Activated B cell treated with CpG ODN at 0.5 μM for 24 hours (primary cell): ENCODE measurements at regions of chr9 and their contacts with region 1.

Region 1: DNA sequence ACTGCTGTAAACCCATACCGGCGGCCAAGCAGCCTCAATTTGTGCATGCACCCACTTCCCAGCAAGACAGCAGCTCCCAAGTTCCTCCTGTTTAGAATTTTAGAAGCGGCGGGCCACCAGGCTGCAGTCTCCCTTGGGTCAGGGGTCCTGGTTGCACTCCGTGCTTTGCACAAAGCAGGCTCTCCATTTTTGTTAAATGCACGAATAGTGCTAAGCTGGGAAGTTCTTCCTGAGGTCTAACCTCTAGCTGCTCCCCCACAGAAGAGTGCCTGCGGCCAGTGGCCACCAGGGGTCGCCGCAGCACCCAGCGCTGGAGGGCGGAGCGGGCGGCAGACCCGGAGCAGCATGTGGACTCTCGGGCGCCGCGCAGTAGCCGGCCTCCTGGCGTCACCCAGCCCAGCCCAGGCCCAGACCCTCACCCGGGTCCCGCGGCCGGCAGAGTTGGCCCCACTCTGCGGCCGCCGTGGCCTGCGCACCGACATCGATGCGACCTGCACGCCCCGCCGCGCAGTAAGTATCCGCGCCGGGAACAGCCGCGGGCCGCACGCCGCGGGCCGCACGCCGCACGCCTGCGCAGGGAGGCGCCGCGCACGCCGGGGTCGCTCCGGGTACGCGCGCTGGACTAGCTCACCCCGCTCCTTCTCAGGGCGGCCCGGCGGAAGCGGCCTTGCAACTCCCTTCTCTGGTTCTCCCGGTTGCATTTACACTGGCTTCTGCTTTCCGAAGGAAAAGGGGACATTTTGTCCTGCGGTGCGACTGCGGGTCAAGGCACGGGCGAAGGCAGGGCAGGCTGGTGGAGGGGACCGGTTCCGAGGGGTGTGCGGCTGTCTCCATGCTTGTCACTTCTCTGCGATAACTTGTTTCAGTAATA is at the start of gene FXN:
- DNase-seq: peak; percentile 80
- ATAC-seq: peak; percentile 92
- H3K4me3 Mint-ChIP-seq: peak within 1 kb of the TSS; percentile 96
- H3K27ac Mint-ChIP-seq: peak within 1 kb of the TSS; percentile 85
- H3K4me1 Mint-ChIP-seq: peaks cover 14% of the 10 kb centered on the region
- H3K27me3 Mint-ChIP-seq: no peaks in the 10 kb centered on the region
- CTCF ChIP-seq: peak; percentile 83
- total RNA-seq, gene FXN: 12.7 and 17.7 TPM in 2 replicates

Region 2: GRCh38 chr9:68779558-68780384 is 255.9 kb before region 1 on chr9:
- CTCF ChIA-PET with region 1: no interaction called
- POLR2A ChIA-PET with region 1: no interaction called
- intact Hi-C with region 1: loop called (anchors 2 kb)
- DNase-seq: peak; percentile 93
- ATAC-seq: peak; percentile 93
- H3K4me3 Mint-ChIP-seq: no peak overlapping the region
- H3K27ac Mint-ChIP-seq: no peak overlapping the region
- H3K4me1 Mint-ChIP-seq: peaks cover 6% of the 10 kb centered on the region
- H3K27me3 Mint-ChIP-seq: no peaks in the 10 kb centered on the region
- CTCF ChIP-seq: no peak

Region 3: DNA sequence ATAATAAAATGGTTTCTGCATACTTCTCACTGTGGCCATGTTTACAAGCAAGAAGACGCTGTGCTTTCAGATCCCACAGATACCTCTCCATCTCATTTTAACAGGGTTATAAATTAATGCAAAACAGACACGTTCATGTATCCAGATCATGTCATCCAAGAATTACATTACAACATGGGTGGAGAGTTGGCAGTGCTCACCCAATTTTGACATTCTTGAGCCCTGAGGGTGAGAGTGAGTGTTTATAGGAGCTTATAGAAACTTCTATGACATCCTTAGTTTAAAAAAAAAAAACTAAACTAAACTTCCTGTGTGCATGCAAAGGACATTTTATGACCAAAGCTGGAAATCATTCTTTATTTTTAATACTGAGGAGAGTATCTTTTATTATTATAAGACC is 30.8 kb before region 1 on chr9:
- CTCF ChIA-PET with region 1: no interaction called
- POLR2A ChIA-PET with region 1: no interaction called
- intact Hi-C with region 1: no loop called
- DNase-seq: no peak
- ATAC-seq: no peak
- H3K4me3 Mint-ChIP-seq: no peak overlapping the region
- H3K27ac Mint-ChIP-seq: no peak overlapping the region
- H3K4me1 Mint-ChIP-seq: no peaks in the 10 kb centered on the region
- H3K27me3 Mint-ChIP-seq: no peaks in the 10 kb centered on the region
- CTCF ChIP-seq: no peak

Region 4: DNA sequence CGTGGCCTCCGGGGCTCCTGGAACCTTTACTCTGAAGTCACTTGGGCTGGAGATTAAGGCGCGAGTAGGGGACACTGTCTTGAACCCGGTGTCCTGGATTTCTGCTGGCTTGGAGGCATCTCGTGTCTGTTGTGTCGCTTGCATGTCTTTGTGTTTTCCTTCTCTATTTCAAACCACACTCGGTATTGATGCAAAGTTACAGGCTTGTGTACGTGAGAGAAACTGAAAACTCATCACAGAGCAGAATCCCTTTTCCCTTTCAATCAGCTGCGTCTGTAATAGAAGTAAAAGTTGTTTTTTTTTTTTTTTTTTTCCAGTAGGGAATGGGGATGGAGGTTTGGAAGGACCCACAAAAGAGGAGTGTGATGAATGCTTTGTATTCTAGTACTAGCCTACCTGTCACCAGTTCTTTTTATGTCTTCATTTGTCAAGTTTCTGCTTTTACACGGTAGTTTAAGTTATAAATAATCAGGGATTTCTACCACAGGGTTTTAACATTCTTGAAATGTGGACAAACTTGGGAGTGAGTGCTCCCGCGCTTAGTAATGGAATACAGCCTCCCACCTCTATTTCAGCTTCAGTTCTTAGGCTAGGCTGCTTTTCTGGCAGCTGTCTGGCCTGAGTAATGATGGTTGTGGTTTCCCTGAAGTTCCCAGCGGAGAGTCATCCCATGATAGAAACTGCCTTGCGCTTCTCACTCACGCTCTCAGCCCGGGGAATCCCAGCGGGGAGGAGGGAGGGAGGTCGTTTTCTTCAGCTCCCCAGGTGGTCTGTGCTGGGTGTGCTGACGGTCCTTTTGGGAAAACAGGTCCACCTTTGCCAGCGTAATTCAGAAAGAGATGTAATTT is 139.2 kb after region 1 on chr9:
- CTCF ChIA-PET with region 1: no interaction called
- POLR2A ChIA-PET with region 1: no interaction called
- intact Hi-C with region 1: loop called (anchors 5 kb)
- DNase-seq: peak; percentile 19
- ATAC-seq: peak; percentile 68
- H3K4me3 Mint-ChIP-seq: peak overlapping the region; percentile 84
- H3K27ac Mint-ChIP-seq: no peak overlapping the region
- H3K4me1 Mint-ChIP-seq: peaks cover 33% of the 10 kb centered on the region
- H3K27me3 Mint-ChIP-seq: peaks cover 37% of the 10 kb centered on the region
- CTCF ChIP-seq: no peak

Region 5: DNA sequence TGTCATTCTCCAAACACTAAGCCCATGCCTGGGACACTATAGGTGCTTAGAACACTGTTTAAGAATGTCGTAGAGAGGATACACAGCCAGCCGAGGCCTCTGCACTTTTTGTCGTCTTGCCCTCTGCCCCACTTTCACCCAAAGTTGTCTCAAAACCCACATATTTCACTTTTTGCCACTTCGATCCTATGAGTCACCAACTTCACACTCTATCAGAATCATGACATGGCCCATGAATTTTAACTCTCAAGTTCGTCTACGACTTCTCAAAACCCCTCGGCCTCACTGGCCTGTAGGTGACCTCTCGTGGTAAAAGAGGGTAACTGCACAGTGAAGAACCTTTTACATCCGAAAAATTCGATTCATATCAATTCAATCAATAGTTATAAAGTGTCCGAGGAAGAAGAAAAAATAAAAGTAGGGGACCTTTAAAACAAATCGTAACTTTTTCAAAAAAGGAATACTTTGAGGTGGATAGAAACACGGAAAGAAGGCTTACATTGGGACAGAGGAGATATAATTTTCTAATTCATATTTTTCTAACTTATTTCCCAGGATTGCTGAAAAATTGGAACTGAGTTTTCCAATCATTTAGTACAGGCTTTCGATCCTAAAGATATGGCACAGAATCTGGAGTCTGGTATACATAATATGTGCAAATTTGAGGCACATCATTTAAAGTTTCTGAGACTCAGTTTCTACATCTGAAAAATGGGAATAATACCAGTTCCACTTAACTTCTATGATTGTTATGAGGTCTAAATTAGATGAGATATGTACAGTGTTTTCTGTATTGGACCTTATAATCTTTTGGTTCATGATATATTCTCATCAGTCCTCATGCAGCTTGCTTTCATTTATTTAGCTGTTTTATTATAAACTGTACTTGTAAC is 513.9 kb after region 1 on chr9:
- CTCF ChIA-PET with region 1: no interaction called
- POLR2A ChIA-PET with region 1: no interaction called
- intact Hi-C with region 1: loop called (anchors 1 kb)
- DNase-seq: no peak
- ATAC-seq: no peak
- H3K4me3 Mint-ChIP-seq: no peak overlapping the region
- H3K27ac Mint-ChIP-seq: no peak overlapping the region
- H3K4me1 Mint-ChIP-seq: no peaks in the 10 kb centered on the region
- H3K27me3 Mint-ChIP-seq: peaks cover 6% of the 10 kb centered on the region
- CTCF ChIP-seq: peak; percentile 82

Region 6: DNA sequence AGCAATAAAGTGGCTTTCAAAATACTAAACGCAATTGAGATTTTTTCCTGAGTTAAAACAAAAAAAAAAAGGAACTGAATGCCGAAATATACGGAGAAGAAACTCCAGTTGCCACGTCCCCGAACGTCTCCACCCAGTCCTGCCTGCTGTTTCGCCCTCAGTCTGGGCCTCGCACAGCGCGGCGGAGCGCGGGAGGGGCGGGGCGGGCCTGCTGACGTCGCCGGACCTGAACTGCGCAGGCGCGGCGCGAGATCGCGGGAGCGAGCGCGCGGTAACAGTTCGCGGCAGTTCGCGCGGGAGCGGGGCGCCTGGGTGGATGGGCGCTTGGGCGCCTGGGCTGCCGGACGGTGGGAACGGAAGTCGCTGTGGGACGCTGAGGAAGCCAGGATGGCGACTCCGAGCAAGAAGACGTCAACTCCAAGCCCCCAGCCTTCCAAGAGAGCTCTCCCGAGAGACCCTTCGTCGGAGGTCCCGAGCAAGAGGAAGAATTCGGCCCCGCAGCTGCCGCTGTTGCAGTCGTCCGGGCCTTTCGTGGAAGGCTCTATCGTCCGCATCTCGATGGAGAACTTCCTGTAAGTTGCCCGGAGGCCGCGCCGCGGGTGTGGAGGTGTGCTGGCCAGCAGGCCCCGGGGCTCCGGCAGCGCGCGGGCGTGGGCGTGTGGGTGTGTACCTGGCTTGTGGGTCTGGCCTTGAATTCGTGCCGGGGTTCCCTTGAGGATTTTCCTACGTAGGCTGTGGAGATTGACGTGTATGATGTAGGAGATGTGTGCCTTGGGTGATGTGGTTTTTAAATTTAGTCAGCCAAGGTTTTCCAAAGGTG is 1223.2 kb after region 1 on chr9 and contains the start of gene SMC5:
- CTCF ChIA-PET with region 1: no interaction called
- POLR2A ChIA-PET with region 1: no interaction called
- intact Hi-C with region 1: loop called (anchors 10 kb)
- DNase-seq: peak; percentile 90
- ATAC-seq: peak; percentile 82
- H3K4me3 Mint-ChIP-seq: peak within 1 kb of the TSS; percentile 93
- H3K27ac Mint-ChIP-seq: peak within 1 kb of the TSS; percentile 99
- H3K4me1 Mint-ChIP-seq: peaks cover 52% of the 10 kb centered on the region
- H3K27me3 Mint-ChIP-seq: no peaks in the 10 kb centered on the region
- CTCF ChIP-seq: no peak
- total RNA-seq, gene SMC5: 46.9 and 49.3 TPM in 2 replicates